K562 (cell line): ENCODE measurements at regions of chr11 and their contacts with region 1.

Region 1: DNA sequence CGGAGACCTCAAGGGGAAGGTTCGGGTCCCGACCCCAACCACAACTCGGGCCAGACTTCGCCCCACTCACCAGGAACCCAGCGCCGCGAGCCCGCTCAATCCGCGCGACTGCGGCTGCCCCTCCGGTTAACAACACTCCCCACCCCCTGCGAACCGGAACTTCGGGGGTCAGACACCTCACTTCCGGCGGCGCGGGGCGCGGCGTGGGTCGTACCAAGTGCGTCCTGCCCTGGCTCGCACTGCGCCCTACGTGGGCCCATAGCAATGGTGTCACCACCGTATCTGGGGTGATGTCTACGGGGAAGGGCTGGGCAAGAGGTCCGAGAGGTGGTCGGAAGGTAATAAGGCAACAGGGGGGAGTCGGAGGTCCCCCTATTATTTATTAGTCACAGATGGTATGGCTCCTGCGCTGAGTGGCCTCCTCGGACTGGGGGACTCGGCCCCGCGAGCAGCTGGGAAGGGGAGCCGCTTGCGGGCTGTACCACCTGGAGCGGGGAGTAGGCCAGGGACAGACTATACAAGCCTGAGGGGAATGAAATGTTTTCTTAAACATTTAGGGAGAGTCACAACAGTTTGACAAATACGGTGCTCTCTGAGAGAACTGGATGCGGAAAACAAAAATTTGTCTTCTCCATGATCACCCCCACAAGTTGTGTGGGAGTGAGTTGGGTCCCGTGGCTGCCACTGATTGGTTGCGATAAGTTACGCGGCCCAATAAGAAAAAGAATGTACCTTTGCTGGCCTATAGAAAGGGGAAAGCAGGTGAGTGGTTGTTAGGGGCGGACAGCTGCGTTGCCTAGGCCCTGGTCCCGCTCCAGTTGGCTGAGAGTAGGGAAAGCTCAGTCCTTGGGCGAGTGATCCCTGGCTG is at the start of gene SYVN1:
- DNase-seq: peak; percentile 91 to 98 (median 94)
- ATAC-seq: peak; percentile 93
- H3K4me3 ChIP-seq: peak within 1 kb of the TSS; percentile 96
- H3K27ac ChIP-seq: peak within 1 kb of the TSS; percentile 98
- H3K4me1 ChIP-seq: peaks cover 21 to 49% of the 10 kb centered on the region in 2 experiments; a peak in 4 of 5 replicates
- H3K27me3 ChIP-seq: no peaks in the 10 kb centered on the region; a peak in 1 of 5 replicates
- CTCF ChIP-seq: no peak
- EP300 ChIP-seq: peak; percentile 32; the same call in 1 of the 2 replicates
- POLR2A ChIP-seq: peak; percentile 90
- RAD21 ChIP-seq: peak; percentile 24; a peak in 2 of 4 replicates
- polyA plus RNA-seq, gene SYVN1: 0.41 to 0.63 TPM

Region 2: GRCh38 chr11:65066805-65067554 is 67.6 kb before region 1 on chr11:
- CTCF ChIA-PET with region 1: no interaction called
- POLR2A ChIA-PET with region 1: no interaction called
- in situ Hi-C with region 1: no loop called
- intact Hi-C with region 1: no loop called
- DNase-seq: no peak
- ATAC-seq: no peak
- H3K4me3 ChIP-seq: no peak overlapping the region
- H3K27ac ChIP-seq: no peak overlapping the region
- H3K4me1 ChIP-seq: peaks cover 8 to 20% of the 10 kb centered on the region in 2 experiments
- H3K27me3 ChIP-seq: no peaks in the 10 kb centered on the region
- CTCF ChIP-seq: no peak
- EP300 ChIP-seq: no peak
- POLR2A ChIP-seq: no peak
- RAD21 ChIP-seq: no peak

Region 3: GRCh38 chr11:65117216-65118096 is 17.2 kb before region 1 on chr11 and contains the start of gene ZNHIT2:
- CTCF ChIA-PET with region 1: no interaction called
- POLR2A ChIA-PET with region 1: interaction called, 182 read pairs
- in situ Hi-C with region 1: no loop called
- intact Hi-C with region 1: no loop called
- DNase-seq: peak; percentile 84 to 99 (median 90)
- ATAC-seq: peak; percentile 78
- H3K4me3 ChIP-seq: peak within 1 kb of the TSS; percentile 95
- H3K27ac ChIP-seq: peak within 1 kb of the TSS; percentile 86
- H3K4me1 ChIP-seq: peaks cover 33 to 41% of the 10 kb centered on the region in 2 experiments
- H3K27me3 ChIP-seq: no peaks in the 10 kb centered on the region
- CTCF ChIP-seq: peak; percentile 85 to 97 (median 93)
- EP300 ChIP-seq: peak; percentile 18; the same call in 1 of the 2 replicates
- POLR2A ChIP-seq: peak; percentile 92
- RAD21 ChIP-seq: peak; percentile 84 to 85
- polyA plus RNA-seq, gene ZNHIT2: 0.08 to 0.20 TPM

Region 4: DNA sequence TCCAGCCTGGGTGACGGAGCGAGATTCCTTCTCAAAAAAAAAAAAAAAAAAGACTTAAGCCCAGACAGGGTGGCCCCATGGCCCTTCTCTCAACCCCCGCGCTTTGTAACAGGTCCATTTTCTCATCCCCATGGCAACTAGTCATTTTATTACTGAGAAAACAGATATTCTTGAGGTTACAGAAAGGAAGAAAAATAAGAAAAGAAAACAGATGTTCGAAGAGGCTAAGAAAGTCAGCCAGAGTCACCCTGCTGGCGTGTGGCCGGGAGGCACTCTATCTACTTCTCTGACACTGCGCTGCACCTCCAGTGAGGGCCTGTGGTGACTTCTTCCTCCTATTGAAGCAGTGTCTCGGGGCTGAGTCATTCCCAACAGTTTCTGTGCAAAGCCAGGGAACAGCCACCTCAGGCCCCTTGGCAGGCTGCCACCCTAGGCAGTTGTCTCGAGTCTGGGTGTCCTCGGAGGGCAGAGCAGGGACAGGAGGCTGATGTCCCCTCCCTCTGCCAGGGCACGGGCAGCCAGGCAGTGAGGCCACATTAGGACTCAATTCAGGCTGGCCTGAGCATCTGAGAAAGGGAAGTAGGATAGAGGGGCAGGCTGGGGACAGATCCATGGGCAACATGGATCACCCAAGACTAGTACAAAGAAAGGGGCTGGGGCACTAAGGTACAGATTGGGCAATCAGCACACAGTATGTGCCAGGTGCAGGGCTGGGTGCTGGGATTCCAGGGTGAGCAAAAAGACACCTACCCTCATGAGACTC is 16.1 kb after region 1 on chr11:
- CTCF ChIA-PET with region 1: no interaction called
- POLR2A ChIA-PET with region 1: interaction called, 75 read pairs
- in situ Hi-C with region 1: no loop called
- intact Hi-C with region 1: no loop called
- DNase-seq: peak; percentile 63 to 91 (median 76)
- ATAC-seq: peak; percentile 98
- H3K4me3 ChIP-seq: no peak overlapping the region
- H3K27ac ChIP-seq: peak overlapping the region; percentile 82
- H3K4me1 ChIP-seq: peaks cover 20 to 26% of the 10 kb centered on the region in 2 experiments
- H3K27me3 ChIP-seq: no peaks in the 10 kb centered on the region
- CTCF ChIP-seq: peak in 2 of 3 experiments; percentile 15 to 26; a peak in 1 of 6 replicates
- EP300 ChIP-seq: no peak
- POLR2A ChIP-seq: peak; percentile 56; the same call in 1 of the 2 replicates
- RAD21 ChIP-seq: no peak

Region 5: GRCh38 chr11:65180877-65181568 is 46.4 kb after region 1 on chr11:
- CTCF ChIA-PET with region 1: interaction called, 3 read pairs
- POLR2A ChIA-PET with region 1: interaction called, 15 read pairs
- in situ Hi-C with region 1: no loop called
- intact Hi-C with region 1: loop called (anchors 2 kb)
- DNase-seq: peak; percentile 73 to 84 (median 80)
- ATAC-seq: peak; percentile 86
- H3K4me3 ChIP-seq: peak overlapping the region; percentile 98
- H3K27ac ChIP-seq: peak overlapping the region; percentile 77
- H3K4me1 ChIP-seq: peaks cover 11 to 44% of the 10 kb centered on the region in 2 experiments
- H3K27me3 ChIP-seq: no peaks in the 10 kb centered on the region
- CTCF ChIP-seq: peak; percentile 68 to 77 (median 70)
- EP300 ChIP-seq: no peak
- POLR2A ChIP-seq: no peak
- RAD21 ChIP-seq: peak; percentile 64 to 73

Region 6: DNA sequence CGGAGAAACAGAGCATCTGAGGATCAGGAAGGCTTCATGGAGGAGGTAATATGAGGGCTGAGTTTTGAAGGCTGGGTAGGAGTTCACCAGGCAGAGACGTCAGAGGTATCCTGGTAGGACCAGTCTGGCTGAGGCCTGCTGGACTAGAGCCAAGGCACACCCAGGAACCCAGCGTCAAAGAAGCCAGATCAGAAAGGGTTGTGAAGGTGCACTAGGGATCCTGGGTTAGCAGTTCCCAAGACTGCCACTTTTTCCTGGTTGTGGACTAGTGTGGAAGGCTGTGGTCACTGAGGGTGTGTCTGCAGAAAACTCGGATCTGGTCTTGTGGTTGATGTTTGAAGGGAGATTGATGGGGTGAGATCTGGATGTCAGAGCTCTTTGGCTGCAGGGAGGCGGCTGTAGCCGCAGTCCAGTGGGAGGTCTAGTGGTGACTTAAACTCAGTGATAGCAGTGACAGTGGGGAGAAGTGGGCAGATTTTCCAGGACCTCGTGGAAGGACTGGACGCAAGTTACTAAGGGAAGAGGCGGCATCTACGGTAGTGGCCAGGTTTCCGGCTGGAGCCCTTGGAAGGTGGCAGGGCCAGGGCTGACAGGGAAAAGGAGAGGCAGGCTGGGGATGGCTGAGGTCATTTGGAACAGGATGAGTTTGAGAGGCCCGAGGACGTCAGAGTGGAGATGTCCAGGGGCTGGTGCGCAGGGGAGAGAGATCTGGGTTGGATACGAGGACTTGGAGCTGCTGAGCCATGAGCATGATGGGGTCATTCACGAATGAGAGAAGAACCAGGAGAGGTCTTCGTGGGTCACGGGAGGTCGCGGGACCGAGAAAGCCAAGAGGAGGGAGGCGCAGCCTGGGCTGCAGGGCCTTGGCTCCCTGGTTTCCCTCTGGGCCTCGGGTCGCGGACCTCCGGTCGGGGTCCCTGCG is 517.2 kb after region 1 on chr11:
- CTCF ChIA-PET with region 1: no interaction called
- POLR2A ChIA-PET with region 1: no interaction called
- in situ Hi-C with region 1: no loop called
- intact Hi-C with region 1: no loop called
- DNase-seq: peak; percentile 31 to 77 (median 50)
- ATAC-seq: peak; percentile 42
- H3K4me3 ChIP-seq: peak overlapping the region; percentile 46
- H3K27ac ChIP-seq: peak overlapping the region; percentile 92
- H3K4me1 ChIP-seq: peaks cover 29 to 59% of the 10 kb centered on the region in 2 experiments
- H3K27me3 ChIP-seq: no peaks in the 10 kb centered on the region
- CTCF ChIP-seq: no peak
- EP300 ChIP-seq: no peak
- POLR2A ChIP-seq: no peak
- RAD21 ChIP-seq: no peak